CD4-positive, alpha-beta memory T cell (primary cell): ENCODE measurements at regions of chr14 and their contacts with region 1.

Region 1: GRCh38 chr14:24195191-24196070 is at the start of gene TM9SF1:
- DNase-seq: peak; percentile 89 to 92 (median 92)
- H3K4me3 ChIP-seq: peak within 1 kb of the TSS; percentile 87 to 90
- H3K4me3 Mint-ChIP-seq: peak within 1 kb of the TSS; percentile 93 to 98 (median 94)
- H3K27ac ChIP-seq: peak within 1 kb of the TSS; percentile 98
- H3K27ac Mint-ChIP-seq: peak within 1 kb of the TSS; percentile 92 to 99 (median 98)
- H3K4me1 ChIP-seq: peaks cover 37% of the 10 kb centered on the region
- H3K4me1 Mint-ChIP-seq: peaks cover 31 to 65% (median 48%) of the 10 kb centered on the region in 4 donors
- H3K27me3 ChIP-seq: no peaks in the 10 kb centered on the region
- H3K27me3 Mint-ChIP-seq: no peaks in the 10 kb centered on the region
- total RNA-seq, gene TM9SF1: 24.1 to 26.3 TPM

Region 2: GRCh38 chr14:24080888-24081738 is 114.3 kb before region 1 on chr14:
- CTCF ChIA-PET with region 1: no interaction called
- POLR2A ChIA-PET with region 1: interaction called, 12 read pairs
- intact Hi-C with region 1: no loop called
- DNase-seq: peak; percentile 64 to 77 (median 67)
- H3K4me3 ChIP-seq: peak overlapping the region; percentile 39 to 60
- H3K4me3 Mint-ChIP-seq: peak overlapping the region; percentile 81 to 90 (median 87)
- H3K27ac ChIP-seq: peak overlapping the region; percentile 50
- H3K27ac Mint-ChIP-seq: peak overlapping the region; percentile 64 to 92 (median 88)
- H3K4me1 ChIP-seq: peaks cover 14% of the 10 kb centered on the region
- H3K4me1 Mint-ChIP-seq: peaks cover 10 to 27% (median 15%) of the 10 kb centered on the region in 4 donors
- H3K27me3 ChIP-seq: no peaks in the 10 kb centered on the region
- H3K27me3 Mint-ChIP-seq: no peaks in the 10 kb centered on the region

Region 3: GRCh38 chr14:24146978-24147760 is 48.3 kb before region 1 on chr14 and contains the start of gene RNF31:
- CTCF ChIA-PET with region 1: interaction called, 3 read pairs
- POLR2A ChIA-PET with region 1: interaction called, 29 read pairs
- intact Hi-C with region 1: no loop called
- DNase-seq: peak; percentile 95 to 99 (median 97)
- H3K4me3 ChIP-seq: peak within 1 kb of the TSS; percentile 85 to 99
- H3K4me3 Mint-ChIP-seq: peak within 1 kb of the TSS; percentile 97 to 100 (median 98)
- H3K27ac ChIP-seq: peak within 1 kb of the TSS; percentile 92
- H3K27ac Mint-ChIP-seq: peak within 1 kb of the TSS; percentile 95 to 99 (median 98)
- H3K4me1 ChIP-seq: peaks cover 63% of the 10 kb centered on the region
- H3K4me1 Mint-ChIP-seq: peaks cover 32 to 80% (median 54%) of the 10 kb centered on the region in 4 donors
- H3K27me3 ChIP-seq: no peaks in the 10 kb centered on the region
- H3K27me3 Mint-ChIP-seq: no peaks in the 10 kb centered on the region
- total RNA-seq, gene RNF31: 108 to 113 TPM

Region 4: DNA sequence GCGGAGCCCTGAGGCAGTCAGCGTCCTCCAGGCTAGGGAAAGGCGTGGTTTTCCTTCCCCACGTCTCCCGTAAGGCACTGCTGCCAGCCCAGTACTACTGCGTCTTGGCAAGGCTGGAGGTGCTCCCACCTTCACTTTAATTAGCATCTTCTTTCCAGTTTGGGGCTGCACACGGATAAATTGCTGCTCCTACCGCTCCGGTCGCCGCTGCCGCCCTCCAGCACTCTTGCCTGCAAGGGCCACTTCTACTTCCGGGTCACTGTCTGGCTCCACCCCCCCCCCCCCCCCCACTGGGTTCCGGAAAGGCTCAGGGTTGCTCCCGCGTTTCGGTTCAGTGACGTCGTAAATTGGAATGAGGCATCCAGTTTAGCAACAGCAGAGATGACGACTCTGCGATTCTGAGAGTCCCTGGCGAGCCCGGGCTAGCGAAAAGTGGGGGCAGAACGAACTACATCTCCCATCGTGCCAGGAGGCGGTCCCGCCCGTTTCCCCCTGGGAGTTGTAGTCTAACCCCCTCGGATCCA is 36.8 kb after region 1 on chr14 and contains the start of gene NEDD8:
- CTCF ChIA-PET with region 1: no interaction called
- POLR2A ChIA-PET with region 1: interaction called, 16 read pairs
- intact Hi-C with region 1: loop called (anchors 1 kb)
- DNase-seq: peak; percentile 89 to 96 (median 89)
- H3K4me3 ChIP-seq: peak within 1 kb of the TSS; percentile 100
- H3K4me3 Mint-ChIP-seq: peak within 1 kb of the TSS; percentile 97 to 99 (median 98)
- H3K27ac ChIP-seq: peak within 1 kb of the TSS; percentile 88
- H3K27ac Mint-ChIP-seq: peak within 1 kb of the TSS; percentile 95 to 99 (median 97)
- H3K4me1 ChIP-seq: peaks cover 41% of the 10 kb centered on the region
- H3K4me1 Mint-ChIP-seq: peaks cover 41 to 68% (median 54%) of the 10 kb centered on the region in 4 donors
- H3K27me3 ChIP-seq: no peaks in the 10 kb centered on the region
- H3K27me3 Mint-ChIP-seq: no peaks in the 10 kb centered on the region
- total RNA-seq, gene NEDD8: 116 to 127 TPM

Region 5: GRCh38 chr14:24442273-24443052 is 247.0 kb after region 1 on chr14 and contains the start of gene SDR39U1:
- CTCF ChIA-PET with region 1: interaction called, 4 read pairs
- POLR2A ChIA-PET with region 1: interaction called, 11 read pairs
- intact Hi-C with region 1: no loop called
- DNase-seq: peak; percentile 95 to 99 (median 98)
- H3K4me3 ChIP-seq: peak within 1 kb of the TSS; percentile 73 to 85
- H3K4me3 Mint-ChIP-seq: peak within 1 kb of the TSS; percentile 87 to 97 (median 92)
- H3K27ac ChIP-seq: peak within 1 kb of the TSS; percentile 93
- H3K27ac Mint-ChIP-seq: peak within 1 kb of the TSS; percentile 93 to 99 (median 99)
- H3K4me1 ChIP-seq: peaks cover 27% of the 10 kb centered on the region
- H3K4me1 Mint-ChIP-seq: peaks cover 20 to 57% (median 41%) of the 10 kb centered on the region in 4 donors
- H3K27me3 ChIP-seq: no peaks in the 10 kb centered on the region
- H3K27me3 Mint-ChIP-seq: no peaks in the 10 kb centered on the region
- total RNA-seq, gene SDR39U1: 102 to 109 TPM

Region 6: GRCh38 chr14:24473211-24473610 is 277.8 kb after region 1 on chr14:
- CTCF ChIA-PET with region 1: no interaction called
- POLR2A ChIA-PET with region 1: no interaction called
- intact Hi-C with region 1: no loop called
- DNase-seq: no peak
- H3K4me3 ChIP-seq: no peak overlapping the region
- H3K4me3 Mint-ChIP-seq: no peak overlapping the region
- H3K27ac ChIP-seq: no peak overlapping the region
- H3K27ac Mint-ChIP-seq: no peak overlapping the region
- H3K4me1 ChIP-seq: no peaks in the 10 kb centered on the region
- H3K4me1 Mint-ChIP-seq: no peaks in the 10 kb centered on the region
- H3K27me3 ChIP-seq: no peaks in the 10 kb centered on the region
- H3K27me3 Mint-ChIP-seq: peaks cover 0 to 4% of the 10 kb centered on the region in 2 donors